ENCODE measurements at regions of chr20 and their contacts with region 1.

Region 1: GRCh38 chr20:59925939-59926338 is 7.5 kb downstream of the SYCP2 start:
- DNase-seq: no peak

Region 2: DNA sequence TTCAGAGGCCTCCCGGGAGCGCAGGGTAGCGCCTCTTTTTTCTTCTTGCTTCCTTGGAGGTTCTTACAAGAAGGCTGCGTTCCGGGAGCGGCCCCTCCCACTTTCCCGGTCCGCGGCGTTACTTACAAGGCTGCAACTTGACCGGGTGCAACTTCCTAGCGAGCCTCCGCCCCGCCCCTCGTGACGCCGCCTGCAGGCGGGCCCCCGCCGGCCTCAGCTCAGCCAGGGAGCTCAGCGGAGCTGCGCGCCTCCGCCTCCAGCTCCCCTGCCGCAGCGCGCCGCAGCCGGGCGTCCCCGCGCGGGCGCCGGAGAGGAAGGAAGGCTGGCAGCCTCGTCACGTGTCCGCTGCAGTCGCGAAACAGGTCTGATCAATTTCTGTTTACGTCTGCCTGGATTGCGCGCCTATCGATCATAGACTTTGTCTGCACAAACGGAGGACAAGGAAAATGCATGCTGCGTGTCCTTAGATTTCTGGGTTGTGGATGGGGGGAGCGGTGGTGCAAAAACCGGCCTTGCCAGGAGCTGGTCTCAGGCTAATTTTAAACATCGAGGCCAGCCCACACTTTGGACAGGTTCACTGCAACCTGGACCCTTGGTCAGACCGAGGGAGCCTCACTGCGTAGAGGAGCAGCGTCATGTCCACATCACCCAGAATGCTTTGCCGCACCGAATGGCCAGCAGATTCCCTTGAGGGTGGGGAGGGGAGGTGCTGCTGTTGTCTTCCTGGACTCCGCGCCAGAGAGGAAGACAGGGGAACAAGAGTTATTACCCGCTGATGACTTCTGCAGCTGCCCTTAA is 14.4 kb after region 1 on chr20 and contains the starts of genes FAM217B and PPP1R3D:
- CTCF ChIA-PET with region 1: interaction called, 5 read pairs
- POLR2A ChIA-PET with region 1: interaction called, 19 read pairs
- DNase-seq: peak; percentile 88

Region 3: GRCh38 chr20:60037120-60037499 is 111.2 kb after region 1 on chr20:
- CTCF ChIA-PET with region 1: no interaction called
- POLR2A ChIA-PET with region 1: no interaction called
- DNase-seq: no peak